Activated CD4-positive, alpha-beta T cell treated with anti-CD3 and anti-CD28 coated beads, Interleukin-2, amount 10 ng/mL, durations not matched to agents 24 days and 14 days (primary cell): ENCODE measurements at regions of chr3 and their contacts with region 1.

Region 1: GRCh38 chr3:33636125-33636850 is 81.8 kb downstream of the CLASP2 start:
- DNase-seq: no peak
- H3K4me3 Mint-ChIP-seq: no peak overlapping the region
- H3K27ac Mint-ChIP-seq: no peak overlapping the region
- H3K4me1 Mint-ChIP-seq: peaks cover 2% of the 10 kb centered on the region
- H3K27me3 Mint-ChIP-seq: no peaks in the 10 kb centered on the region

Region 2: GRCh38 chr3:33646406-33646805 is 10.1 kb after region 1 on chr3:
- intact Hi-C with region 1: no loop called
- DNase-seq: no peak
- H3K4me3 Mint-ChIP-seq: no peak overlapping the region
- H3K27ac Mint-ChIP-seq: no peak overlapping the region
- H3K4me1 Mint-ChIP-seq: peaks cover 6% of the 10 kb centered on the region
- H3K27me3 Mint-ChIP-seq: no peaks in the 10 kb centered on the region

Region 3: GRCh38 chr3:33704891-33705290 is 68.6 kb after region 1 on chr3:
- intact Hi-C with region 1: no loop called
- DNase-seq: no peak
- H3K4me3 Mint-ChIP-seq: no peak overlapping the region
- H3K27ac Mint-ChIP-seq: no peak overlapping the region
- H3K4me1 Mint-ChIP-seq: peaks cover 6% of the 10 kb centered on the region
- H3K27me3 Mint-ChIP-seq: no peaks in the 10 kb centered on the region

Region 4: DNA sequence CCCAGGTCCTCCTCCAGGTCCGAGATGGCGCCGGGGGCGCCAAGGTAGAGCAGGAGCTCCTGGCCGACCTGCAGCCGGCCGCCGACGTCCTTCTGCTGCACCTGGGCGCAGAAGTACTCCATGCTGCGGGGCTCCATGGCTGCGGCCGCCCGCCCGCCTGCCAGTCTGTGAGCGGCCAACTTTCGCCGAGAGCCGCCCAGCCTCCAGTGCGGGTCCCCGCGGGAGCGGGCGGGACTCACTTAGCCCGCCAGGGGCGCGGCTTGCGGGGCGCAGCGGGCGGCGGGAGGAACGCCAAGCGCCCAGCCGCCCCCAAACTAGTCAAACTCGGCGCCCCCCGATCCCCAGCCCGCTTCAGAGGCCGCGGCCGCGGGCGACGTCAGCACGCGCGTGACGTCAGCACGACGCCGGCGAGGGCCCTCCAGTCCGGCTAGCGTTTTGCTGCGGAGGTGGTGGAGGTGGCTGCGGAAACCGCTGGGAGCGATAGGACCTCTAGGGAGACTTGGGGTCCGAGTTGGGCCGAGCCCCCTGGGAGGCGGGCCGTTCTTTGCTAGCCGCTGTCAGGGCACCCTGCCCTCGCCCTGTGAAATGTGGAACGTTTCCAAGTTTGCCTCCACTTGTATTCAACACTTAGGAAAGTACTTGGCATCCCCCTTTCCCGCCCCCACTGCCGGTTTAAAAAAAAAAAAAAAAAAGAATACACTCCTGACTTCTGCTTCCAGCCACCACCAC is 81.7 kb after region 1 on chr3 and contains the start of gene CLASP2:
- intact Hi-C with region 1: loop called (anchors 5 kb)
- DNase-seq: peak; percentile 96
- H3K4me3 Mint-ChIP-seq: no peak within 1 kb of the TSS
- H3K27ac Mint-ChIP-seq: peak within 1 kb of the TSS; percentile 88
- H3K4me1 Mint-ChIP-seq: peaks cover 12% of the 10 kb centered on the region
- H3K27me3 Mint-ChIP-seq: peaks cover 6% of the 10 kb centered on the region
- total RNA-seq, gene CLASP2: 65.3 and 65.8 TPM in 2 replicates

Region 5: GRCh38 chr3:33773637-33774036 is 137.3 kb after region 1 on chr3:
- intact Hi-C with region 1: loop called (anchors 1 kb)
- DNase-seq: no peak
- H3K4me3 Mint-ChIP-seq: no peak overlapping the region
- H3K27ac Mint-ChIP-seq: no peak overlapping the region
- H3K4me1 Mint-ChIP-seq: no peaks in the 10 kb centered on the region
- H3K27me3 Mint-ChIP-seq: peaks cover 6% of the 10 kb centered on the region